ENCODE measurements at regions of chr11 and their contacts with region 1.

Region 1: GRCh38 chr11:2196970-2197770 is 25.6 kb upstream of the TH start:
- DNase-seq: no peak
- H3K4me3 ChIP-seq: no peak overlapping the region
- CTCF ChIP-seq: peak; percentile 98

Region 2: DNA sequence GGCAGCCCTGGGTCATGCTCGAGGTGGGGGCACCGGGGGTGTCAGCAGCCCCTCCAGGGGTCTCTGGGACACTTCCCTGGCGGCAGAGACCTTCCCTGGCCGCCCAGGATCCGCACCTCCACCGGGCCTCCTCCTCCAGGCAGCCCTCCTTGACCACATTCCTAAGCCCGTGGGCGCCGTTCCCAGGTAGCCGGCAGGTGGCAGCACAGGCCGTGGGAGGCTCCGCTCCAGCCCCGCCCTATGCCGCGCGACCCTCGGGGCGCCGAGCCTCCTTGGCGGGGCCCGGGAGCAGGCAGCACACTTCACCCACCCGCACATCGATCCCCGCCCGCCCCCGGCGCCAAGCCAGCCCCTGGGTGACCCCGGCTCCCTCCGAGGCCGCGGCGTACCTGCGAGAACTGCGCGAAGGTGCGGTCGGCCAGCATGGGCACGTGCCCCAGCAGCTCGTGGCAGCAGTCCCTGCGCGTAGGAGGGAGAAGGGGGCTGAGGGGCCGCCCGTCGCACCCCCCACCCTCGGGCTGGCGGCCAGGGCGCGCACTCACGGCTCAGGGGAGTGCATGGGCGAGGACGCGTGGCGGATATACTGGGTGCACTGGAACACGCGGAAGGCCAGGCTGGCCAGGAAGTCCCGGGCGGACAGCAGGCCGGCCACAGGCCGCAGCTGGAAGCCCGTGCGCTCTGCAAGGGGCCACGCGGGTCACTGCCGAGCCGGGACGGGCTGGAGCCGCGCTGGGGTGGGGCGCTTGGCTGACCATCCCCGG is 30.9 kb before region 1 on chr11:
- CTCF ChIA-PET with region 1: interaction called, 12 read pairs
- POLR2A ChIA-PET with region 1: no interaction called
- DNase-seq: no peak
- H3K4me3 ChIP-seq: no peak overlapping the region
- CTCF ChIP-seq: peak; percentile 59

Region 3: DNA sequence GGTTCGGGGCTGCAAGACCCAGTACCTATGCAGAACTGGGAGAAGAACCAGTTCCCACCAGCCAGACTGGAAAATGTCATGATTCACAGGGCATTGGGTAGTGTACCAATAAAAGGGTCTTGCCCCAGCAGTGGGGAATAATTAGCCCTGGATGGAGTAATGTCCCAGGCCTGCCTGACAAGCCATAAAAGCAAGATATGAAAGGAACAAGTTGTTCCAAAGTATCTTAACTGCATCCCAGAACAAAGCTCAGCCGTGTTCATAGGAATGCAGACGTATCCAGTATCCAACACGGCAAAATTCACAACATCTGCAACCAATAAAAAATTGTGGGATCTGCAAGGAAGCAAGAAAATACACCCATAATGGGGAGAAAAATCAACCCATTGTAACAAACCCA is 25.3 kb after region 1 on chr11:
- CTCF ChIA-PET with region 1: interaction called, 10 read pairs
- POLR2A ChIA-PET with region 1: no interaction called
- DNase-seq: no peak
- H3K4me3 ChIP-seq: no peak overlapping the region
- CTCF ChIP-seq: no peak

Region 4: GRCh38 chr11:2400069-2400760 is 203.0 kb after region 1 on chr11 and contains the start of gene TSSC4:
- CTCF ChIA-PET with region 1: interaction called, 21 read pairs
- POLR2A ChIA-PET with region 1: no interaction called
- DNase-seq: peak; percentile 99
- H3K4me3 ChIP-seq: peak within 1 kb of the TSS; percentile 99
- CTCF ChIP-seq: peak; percentile 99

Region 5: GRCh38 chr11:2428322-2428795 is 231.2 kb after region 1 on chr11:
- CTCF ChIA-PET with region 1: interaction called, 216 read pairs
- POLR2A ChIA-PET with region 1: no interaction called
- DNase-seq: no peak
- H3K4me3 ChIP-seq: no peak overlapping the region
- CTCF ChIP-seq: peak; percentile 77